Testis (tissue), 5 donors: ENCODE measurements at regions of chr11 and their contacts with region 1.

Region 1: GRCh38 chr11:2196970-2197770 is 25.6 kb upstream of the TH start:
- DNase-seq: peak; percentile 89
- H3K4me3 ChIP-seq: no peak overlapping the region
- H3K27ac ChIP-seq: no peak overlapping the region
- H3K4me1 ChIP-seq: no peaks in the 10 kb centered on the region
- H3K27me3 ChIP-seq: no peaks in the 10 kb centered on the region
- CTCF ChIP-seq: peak; percentile 84 to 94 (median 87)
- POLR2A ChIP-seq: no peak

Region 2: DNA sequence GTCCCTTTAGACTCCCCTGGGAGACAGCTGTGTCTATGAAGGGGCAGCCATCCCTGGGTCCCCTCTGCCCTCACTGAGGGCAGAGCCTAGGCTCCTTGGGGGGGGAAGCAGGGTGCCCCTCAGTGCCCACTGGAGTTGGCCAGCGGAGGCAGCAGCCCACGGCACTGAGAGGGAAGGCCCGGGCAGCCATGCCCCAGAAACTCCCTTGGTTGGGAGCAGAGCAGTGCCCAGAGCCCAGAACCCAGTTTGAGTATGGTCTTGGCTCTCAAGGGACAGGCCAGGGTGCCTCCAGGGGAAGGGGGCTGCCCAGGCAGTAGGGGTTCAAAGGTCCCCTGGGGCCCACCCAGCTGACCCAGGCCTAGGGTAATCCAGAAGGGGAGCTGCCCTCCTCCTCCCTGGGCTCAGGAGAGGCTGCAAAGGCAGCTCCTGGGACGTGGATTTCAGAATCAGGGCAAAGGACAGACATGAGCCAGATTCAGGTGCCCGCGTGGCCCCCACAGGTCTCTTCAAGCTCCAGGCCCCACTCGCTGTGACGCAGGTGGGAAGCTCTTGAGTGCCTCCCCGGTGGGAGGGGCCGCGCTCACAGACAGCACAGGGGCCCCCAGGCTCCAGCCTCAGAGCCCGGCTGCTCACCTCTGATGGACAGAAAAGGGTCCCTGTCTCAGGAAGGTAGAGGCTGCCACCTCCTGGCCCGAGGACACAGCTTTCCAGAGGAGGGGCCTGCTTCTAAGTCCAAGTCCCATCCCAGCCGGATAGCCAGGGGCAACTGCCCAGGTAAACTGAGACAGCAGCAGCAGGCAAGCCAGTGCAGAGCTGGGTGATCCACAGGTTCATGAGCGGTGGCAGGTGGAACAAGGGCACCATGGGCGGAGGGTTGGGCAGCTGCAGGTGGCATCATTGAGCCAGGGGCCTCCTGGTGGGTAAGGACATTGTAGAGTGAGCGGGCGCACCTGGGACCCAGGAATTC is 101.9 kb after region 1 on chr11:
- intact Hi-C with region 1: loop called (anchors 5 kb)
- DNase-seq: peak; percentile 54
- H3K4me3 ChIP-seq: no peak overlapping the region
- H3K27ac ChIP-seq: no peak overlapping the region
- H3K4me1 ChIP-seq: peaks cover 18% of the 10 kb centered on the region
- H3K27me3 ChIP-seq: no peaks in the 10 kb centered on the region
- CTCF ChIP-seq: peak in 1 of 3 experiments; percentile 15
- POLR2A ChIP-seq: no peak

Region 3: GRCh38 chr11:2409611-2410468 is 212.7 kb after region 1 on chr11:
- intact Hi-C with region 1: loop called (anchors 5 kb)
- DNase-seq: no peak
- H3K4me3 ChIP-seq: no peak overlapping the region
- H3K27ac ChIP-seq: no peak overlapping the region
- H3K4me1 ChIP-seq: no peaks in the 10 kb centered on the region
- H3K27me3 ChIP-seq: no peaks in the 10 kb centered on the region
- CTCF ChIP-seq: no peak
- POLR2A ChIP-seq: no peak